Stomach (tissue), 19 donors: ENCODE measurements at regions of chr3 and their contacts with region 1.

Region 1: DNA sequence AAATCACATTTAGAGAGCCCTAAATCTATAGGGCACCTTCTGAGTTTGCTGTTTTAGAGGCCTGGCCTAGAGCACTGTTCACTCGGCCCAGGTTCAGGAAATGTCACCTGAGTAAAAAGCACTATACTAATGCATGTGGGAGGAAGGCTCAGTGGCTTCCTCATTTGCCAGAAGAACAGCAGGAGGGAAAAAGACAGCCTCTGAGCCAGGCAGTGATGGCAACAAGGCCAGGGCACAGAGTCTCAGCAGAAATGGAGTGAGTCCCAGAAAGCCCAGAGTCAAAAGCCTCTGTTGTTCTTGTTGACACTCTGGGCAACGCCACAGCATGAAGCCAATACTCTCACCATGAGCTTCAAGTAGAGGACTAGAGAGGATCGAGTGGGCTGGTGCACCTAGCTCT is 25.9 kb downstream of the LTF start:
- DNase-seq: no peak
- H3K4me3 ChIP-seq: no peak overlapping the region
- H3K27ac ChIP-seq: no peak overlapping the region
- H3K4me1 ChIP-seq: no peaks in the 10 kb centered on the region
- H3K27me3 ChIP-seq: no peaks in the 10 kb centered on the region
- CTCF ChIP-seq: no peak
- EP300 ChIP-seq: no peak
- POLR2A ChIP-seq: no peak

Region 2: GRCh38 chr3:46297658-46298463 is 141.0 kb before region 1 on chr3:
- intact Hi-C with region 1: loop called (anchors 10 kb)
- DNase-seq: peak in 1 of 2 donors; percentile 17
- H3K4me3 ChIP-seq: no peak overlapping the region
- H3K27ac ChIP-seq: peak overlapping the region in 1 of 5 donors; percentile 52
- H3K4me1 ChIP-seq: peaks cover 0 to 8% (median 0%) of the 10 kb centered on the region in 4 donors
- H3K27me3 ChIP-seq: no peaks in the 10 kb centered on the region
- CTCF ChIP-seq: no peak
- EP300 ChIP-seq: no peak
- POLR2A ChIP-seq: no peak